Heart right ventricle (tissue), 16 donors: ENCODE measurements at regions of chr14 and their contacts with region 1.

Region 1: DNA sequence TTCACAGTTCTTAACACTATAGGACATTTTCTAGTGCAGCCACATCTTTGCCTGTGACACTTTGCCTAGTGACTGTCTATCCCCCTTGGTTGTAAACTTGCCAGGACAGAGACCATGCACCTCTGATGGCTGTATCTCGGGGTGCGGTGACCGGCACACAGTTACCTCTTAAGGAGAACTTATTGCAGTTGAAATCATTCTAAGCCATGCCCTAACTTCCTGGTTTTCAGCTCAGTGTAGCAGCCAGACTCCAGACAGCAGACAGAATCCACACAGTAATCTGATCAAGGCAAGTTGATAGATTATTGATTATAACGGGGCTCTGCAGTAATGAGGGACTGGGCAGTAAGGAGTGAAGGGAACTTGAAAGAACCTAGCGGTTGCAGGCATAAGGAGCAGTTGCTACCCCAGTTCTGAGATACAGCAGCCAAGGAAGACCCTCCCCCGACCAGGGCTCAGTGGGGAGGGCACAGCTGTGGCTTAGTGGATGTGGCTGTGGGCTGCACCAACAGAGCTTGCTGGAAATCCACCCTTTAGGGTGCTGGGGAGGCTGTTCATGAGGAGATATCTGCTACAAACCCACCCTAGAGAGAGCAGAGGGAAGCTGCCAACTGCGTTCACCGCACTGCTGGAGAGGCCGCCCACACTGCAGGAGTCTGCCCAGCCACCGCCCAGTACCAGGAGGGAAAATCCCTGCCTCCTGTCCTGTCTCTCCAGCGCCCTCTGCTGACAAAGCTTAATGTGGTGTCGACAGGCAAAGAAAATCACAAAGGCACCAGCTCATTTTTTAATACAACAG is 58.2 kb upstream of the BEGAIN start:
- DNase-seq: peak; percentile 70 to 80
- ATAC-seq: peak; percentile 70 to 93 (median 87)
- H3K4me3 ChIP-seq: no peak overlapping the region
- H3K27ac ChIP-seq: no peak overlapping the region
- H3K4me1 ChIP-seq: peaks cover 0 to 14% (median 0%) of the 10 kb centered on the region in 9 donors
- H3K27me3 ChIP-seq: peaks cover 0 to 17% (median 5%) of the 10 kb centered on the region in 7 donors
- CTCF ChIP-seq: peak; percentile 60 to 85 (median 73)

Region 2: GRCh38 chr14:100383727-100384158 is 261.6 kb before region 1 on chr14:
- intact Hi-C with region 1: loop called in 9 of 10 experiments (anchors 2 to 5 kb)
- DNase-seq: peak; percentile 53 to 55
- ATAC-seq: peak; percentile 48 to 83 (median 70)
- H3K4me3 ChIP-seq: no peak overlapping the region
- H3K27ac ChIP-seq: no peak overlapping the region
- H3K4me1 ChIP-seq: peaks cover 0 to 10% (median 0%) of the 10 kb centered on the region in 9 donors
- H3K27me3 ChIP-seq: no peaks in the 10 kb centered on the region
- CTCF ChIP-seq: peak; percentile 66 to 88 (median 82)

Region 3: DNA sequence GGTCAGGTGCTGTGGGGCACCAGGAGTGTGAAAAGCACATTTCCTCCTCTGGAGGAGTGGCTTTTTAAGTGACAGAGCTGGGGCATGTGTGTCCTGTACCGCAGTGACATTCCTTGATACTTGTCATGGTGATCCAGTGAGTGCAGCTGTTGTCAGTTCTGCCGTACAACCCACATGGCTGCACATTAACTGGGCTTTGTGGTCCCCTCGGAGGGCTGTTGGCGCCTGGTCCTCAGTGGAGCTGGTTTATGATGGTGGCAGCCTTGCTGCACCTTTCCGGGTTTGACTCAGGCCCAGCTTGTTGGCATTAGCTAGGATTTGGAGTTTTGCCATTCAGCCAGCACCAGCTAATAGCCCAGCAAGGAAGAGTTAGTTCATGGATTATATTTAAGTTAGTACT is 245.3 kb before region 1 on chr14:
- intact Hi-C with region 1: loop called in 1 of 10 experiments (anchors 5 kb)
- DNase-seq: no peak
- ATAC-seq: peak in 5 of 8 donors; percentile 26 to 73 (median 57)
- H3K4me3 ChIP-seq: no peak overlapping the region
- H3K27ac ChIP-seq: no peak overlapping the region
- H3K4me1 ChIP-seq: peaks cover 0 to 17% (median 4%) of the 10 kb centered on the region in 9 donors
- H3K27me3 ChIP-seq: no peaks in the 10 kb centered on the region
- CTCF ChIP-seq: no peak

Region 4: GRCh38 chr14:100440187-100440631 is 205.2 kb before region 1 on chr14:
- intact Hi-C with region 1: loop called in 9 of 10 experiments (anchors 2 to 10 kb)
- DNase-seq: peak; percentile 33 to 66
- ATAC-seq: peak; percentile 82 to 94 (median 89)
- H3K4me3 ChIP-seq: no peak overlapping the region
- H3K27ac ChIP-seq: peak overlapping the region in 7 of 10 donors; percentile 32 to 69 (median 57)
- H3K4me1 ChIP-seq: peaks cover 6 to 34% (median 24%) of the 10 kb centered on the region in 9 donors
- H3K27me3 ChIP-seq: no peaks in the 10 kb centered on the region
- CTCF ChIP-seq: peak; percentile 49 to 83 (median 62)

Region 5: DNA sequence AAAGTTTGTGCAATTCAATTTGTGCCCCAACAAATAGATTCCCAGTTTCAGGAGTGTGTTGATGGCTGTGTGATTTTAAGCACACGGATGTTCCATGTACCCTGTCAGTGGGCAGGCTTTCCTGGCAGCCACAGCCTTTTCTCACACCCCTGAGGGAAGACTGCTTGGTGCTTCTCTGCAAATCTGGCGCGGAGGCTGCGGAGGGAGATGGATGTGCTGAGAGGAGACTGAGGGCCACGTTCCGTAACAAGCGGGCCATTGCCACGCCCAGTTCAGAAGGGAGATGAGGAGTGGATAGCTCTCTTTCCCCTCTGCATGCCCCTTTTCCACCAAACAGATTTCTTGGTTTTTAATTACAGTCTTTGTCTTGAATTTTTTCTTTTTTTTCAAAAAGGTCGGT is 147.3 kb before region 1 on chr14:
- intact Hi-C with region 1: no loop called
- DNase-seq: no peak
- ATAC-seq: no peak
- H3K4me3 ChIP-seq: no peak overlapping the region
- H3K27ac ChIP-seq: no peak overlapping the region
- H3K4me1 ChIP-seq: no peaks in the 10 kb centered on the region
- H3K27me3 ChIP-seq: no peaks in the 10 kb centered on the region
- CTCF ChIP-seq: no peak

Region 6: DNA sequence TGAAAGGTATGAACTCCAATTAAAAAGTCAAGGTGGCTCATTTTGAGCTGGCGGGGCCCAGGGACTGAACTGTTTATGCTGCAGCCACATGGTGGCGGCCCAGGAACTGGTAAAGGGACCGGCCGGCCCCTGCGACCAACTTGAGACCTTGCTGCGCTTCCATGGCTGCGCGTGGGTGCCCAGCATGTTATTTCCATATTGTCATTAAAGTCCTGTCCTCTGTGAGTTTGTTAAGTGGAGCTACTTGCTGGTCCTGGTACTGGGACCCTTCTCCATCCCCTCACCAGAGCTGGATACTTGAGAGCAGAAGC is 120.5 kb before region 1 on chr14:
- intact Hi-C with region 1: loop called in 2 of 10 experiments (anchors 5 kb)
- DNase-seq: peak in 1 of 2 donors; percentile 13
- ATAC-seq: no peak
- H3K4me3 ChIP-seq: no peak overlapping the region
- H3K27ac ChIP-seq: no peak overlapping the region
- H3K4me1 ChIP-seq: no peaks in the 10 kb centered on the region
- H3K27me3 ChIP-seq: no peaks in the 10 kb centered on the region
- CTCF ChIP-seq: peak in 5 of 9 donors; percentile 19 to 57 (median 43)

Region 7: DNA sequence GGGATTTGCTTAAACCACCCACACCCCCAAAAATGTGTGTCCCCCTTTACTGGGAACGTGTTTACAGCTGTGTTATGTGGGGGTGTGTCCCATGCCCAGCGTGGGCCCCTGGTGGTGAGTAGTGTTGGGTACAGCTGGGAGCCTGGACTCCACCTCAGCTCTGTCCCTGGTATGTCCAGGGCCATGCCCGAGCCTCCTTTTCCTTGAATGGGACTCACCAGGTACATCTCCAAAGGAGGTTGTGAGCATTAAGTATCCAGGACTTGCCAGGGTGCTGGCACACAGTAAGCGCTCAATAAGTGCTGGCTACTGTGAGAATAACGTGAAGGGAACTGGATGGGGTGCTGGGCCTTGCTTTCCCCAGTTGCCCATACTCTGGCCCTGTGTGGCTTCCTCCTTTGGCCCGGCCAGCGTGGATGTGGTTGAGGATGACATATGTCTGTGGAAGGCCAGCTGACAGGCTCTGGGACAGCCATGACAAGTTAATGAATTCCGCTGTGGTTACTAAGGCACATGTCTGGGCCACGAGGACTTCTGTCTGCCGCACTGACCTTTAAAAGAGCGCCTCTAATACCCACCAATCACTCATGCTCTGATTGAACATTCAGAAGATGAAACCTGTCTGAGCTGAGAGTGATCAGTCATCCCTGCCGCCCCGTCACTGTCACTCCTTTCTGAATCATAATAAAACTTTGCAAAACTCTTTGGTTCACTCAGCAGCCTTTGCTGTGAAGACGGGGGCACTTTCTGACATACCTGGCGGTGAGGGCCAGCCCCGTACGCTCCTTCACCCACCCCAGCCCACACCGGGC is 990.6 kb after region 1 on chr14:
- intact Hi-C with region 1: loop called in 1 of 10 experiments (anchors 10 kb)
- DNase-seq: no peak
- ATAC-seq: no peak
- H3K4me3 ChIP-seq: no peak overlapping the region
- H3K27ac ChIP-seq: no peak overlapping the region
- H3K4me1 ChIP-seq: no peaks in the 10 kb centered on the region
- H3K27me3 ChIP-seq: peaks cover 0 to 56% (median 13%) of the 10 kb centered on the region in 7 donors
- CTCF ChIP-seq: no peak